ENCODE measurements at regions of chr7 and their contacts with region 1.

Region 1: DNA sequence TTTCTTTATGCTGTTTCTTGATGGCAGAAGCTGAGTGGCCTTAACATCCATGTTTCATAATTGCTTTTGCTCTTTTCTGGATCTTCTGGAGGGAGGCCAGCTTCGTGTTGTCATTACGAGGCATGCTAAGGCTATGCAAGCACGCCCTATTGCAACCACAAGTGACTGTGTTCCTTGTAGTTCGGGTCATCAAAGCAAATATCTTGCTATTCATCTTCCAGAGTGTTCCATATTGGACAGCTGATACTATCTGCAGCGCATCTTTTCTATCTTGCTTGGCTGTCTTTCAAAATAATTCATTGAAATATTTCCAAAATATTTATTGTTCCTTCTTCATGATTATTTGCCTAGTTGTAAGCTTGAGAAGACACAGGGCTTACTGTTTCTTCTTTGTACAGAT is 5.0 kb downstream of the EPHB6 start:
- DNase-seq: no peak
- ATAC-seq: no peak
- H3K4me3 Mint-ChIP-seq: no peak overlapping the region
- H3K27ac Mint-ChIP-seq: no peak overlapping the region
- H3K4me1 Mint-ChIP-seq: peaks cover 3% of the 10 kb centered on the region
- H3K27me3 Mint-ChIP-seq: no peaks in the 10 kb centered on the region
- CTCF ChIP-seq: no peak

Region 2: DNA sequence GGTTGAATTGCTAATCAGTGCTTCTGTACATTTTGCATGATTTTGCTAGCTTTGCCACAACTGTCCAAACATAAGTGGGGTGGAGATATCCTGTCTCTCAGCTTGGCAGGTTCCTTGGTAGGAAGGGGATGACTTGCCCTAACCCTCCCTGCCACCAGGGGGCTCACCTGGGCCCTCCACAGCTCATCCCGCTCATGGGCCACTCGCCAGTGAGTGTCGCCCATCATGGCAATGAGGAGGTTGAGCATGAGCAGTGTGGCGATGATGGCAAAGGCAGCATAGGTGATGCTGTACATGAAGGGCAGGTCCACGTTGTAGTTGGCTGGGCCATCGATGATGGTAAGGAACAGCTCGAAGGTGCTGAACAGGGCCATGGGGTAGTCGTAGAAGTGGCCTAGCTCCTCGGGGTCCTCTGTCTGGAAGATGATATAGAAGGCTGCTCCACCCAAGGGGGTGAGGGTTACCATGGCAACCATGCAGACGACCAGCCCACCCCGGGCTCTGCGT is 13.5 kb after region 1 on chr7:
- CTCF ChIA-PET with region 1: interaction called, 20 read pairs
- POLR2A ChIA-PET with region 1: no interaction called
- intact Hi-C with region 1: no loop called
- DNase-seq: peak; percentile 58
- ATAC-seq: peak; percentile 91
- H3K4me3 Mint-ChIP-seq: no peak overlapping the region
- H3K27ac Mint-ChIP-seq: no peak overlapping the region
- H3K4me1 Mint-ChIP-seq: no peaks in the 10 kb centered on the region
- H3K27me3 Mint-ChIP-seq: no peaks in the 10 kb centered on the region
- CTCF ChIP-seq: peak; percentile 69

Region 3: GRCh38 chr7:142889816-142890215 is 30.0 kb after region 1 on chr7:
- CTCF ChIA-PET with region 1: no interaction called
- POLR2A ChIA-PET with region 1: no interaction called
- intact Hi-C with region 1: no loop called
- DNase-seq: no peak
- ATAC-seq: peak; percentile 30
- H3K4me3 Mint-ChIP-seq: no peak overlapping the region
- H3K27ac Mint-ChIP-seq: no peak overlapping the region
- H3K4me1 Mint-ChIP-seq: no peaks in the 10 kb centered on the region
- H3K27me3 Mint-ChIP-seq: no peaks in the 10 kb centered on the region
- CTCF ChIP-seq: no peak